PC-3 (cell line): ENCODE measurements at regions of chr5 and their contacts with region 1.

Region 1: DNA sequence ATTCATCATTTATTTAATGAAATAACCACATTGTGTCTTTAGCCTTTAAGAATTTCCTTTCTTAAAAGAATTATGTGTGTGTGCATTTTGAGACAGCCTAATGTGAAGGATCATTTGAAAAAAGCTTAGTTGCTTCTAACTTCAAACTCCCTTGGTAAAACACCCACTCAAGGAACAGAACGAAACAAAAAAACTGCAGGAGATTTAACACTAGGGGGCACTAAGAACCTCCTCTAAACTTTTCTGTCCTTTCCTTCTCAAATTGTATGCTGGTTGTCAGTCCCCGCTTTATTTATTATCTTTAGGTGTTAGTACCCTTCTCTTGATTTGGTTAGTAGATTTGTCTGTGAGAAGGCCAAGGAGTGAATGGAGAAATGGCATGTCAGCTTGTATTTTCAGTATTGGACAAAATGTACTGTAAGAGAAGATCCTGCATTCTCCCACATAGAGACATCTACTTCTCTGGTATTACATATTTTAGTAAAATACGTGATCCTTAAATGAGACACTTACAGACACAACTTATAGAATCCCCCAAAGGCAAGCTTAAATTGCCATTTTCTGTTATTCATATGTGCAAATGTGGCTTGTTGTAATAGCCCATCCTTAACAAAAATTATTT is 229.7 kb downstream of the MRPS30 start:
- DNase-seq: peak; percentile 71
- ATAC-seq: peak; percentile 67
- H3K4me3 ChIP-seq: no peak overlapping the region
- H3K27ac ChIP-seq: no peak overlapping the region
- H3K4me1 ChIP-seq: no peaks in the 10 kb centered on the region
- H3K27me3 ChIP-seq: no peaks in the 10 kb centered on the region
- CTCF ChIP-seq: peak; percentile 85

Region 2: DNA sequence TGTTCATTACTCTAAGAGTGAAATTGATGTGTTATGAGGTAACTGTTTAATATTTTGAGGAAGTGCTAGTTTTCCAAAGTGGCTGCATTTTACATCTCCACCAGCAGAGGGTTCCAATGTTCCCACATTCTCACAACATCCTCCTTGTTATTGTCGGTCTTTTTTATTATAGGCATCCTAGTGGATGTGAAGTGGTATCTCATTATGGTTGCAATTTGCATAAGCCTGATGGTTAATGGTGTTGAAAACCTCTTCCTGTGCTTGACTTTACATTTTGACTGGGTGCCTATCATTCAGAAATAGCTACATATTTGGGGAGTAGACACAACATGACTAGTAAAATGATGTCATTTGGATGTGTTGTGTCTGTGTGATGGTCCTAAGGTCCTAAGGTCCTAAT is 86.1 kb before region 1 on chr5:
- CTCF ChIA-PET with region 1: interaction called, 8 read pairs
- POLR2A ChIA-PET with region 1: no interaction called
- intact Hi-C with region 1: loop called (anchors 5 kb)
- DNase-seq: peak; percentile 74
- ATAC-seq: peak; percentile 63
- H3K4me3 ChIP-seq: no peak overlapping the region
- H3K27ac ChIP-seq: no peak overlapping the region
- H3K4me1 ChIP-seq: no peaks in the 10 kb centered on the region
- H3K27me3 ChIP-seq: no peaks in the 10 kb centered on the region
- CTCF ChIP-seq: peak; percentile 93

Region 3: DNA sequence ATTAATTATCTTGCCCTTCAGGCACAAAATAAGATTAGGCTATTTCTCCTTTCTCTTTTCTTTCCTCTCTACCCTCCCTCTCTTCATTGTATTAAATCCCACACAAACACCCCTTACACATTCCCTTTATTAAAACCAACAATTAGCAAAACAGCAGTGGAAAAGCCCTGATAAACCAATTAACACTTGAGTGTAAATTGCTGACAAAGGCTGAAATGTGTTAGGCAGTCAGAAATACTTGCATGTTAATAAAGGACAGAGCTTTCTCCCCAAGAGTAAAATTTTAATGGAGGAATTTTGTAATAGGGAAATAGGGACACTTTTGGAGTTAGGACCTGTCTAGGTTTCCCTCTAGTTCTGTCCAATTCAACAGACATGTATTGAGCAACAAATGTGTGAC is 141.2 kb after region 1 on chr5:
- CTCF ChIA-PET with region 1: no interaction called
- POLR2A ChIA-PET with region 1: no interaction called
- intact Hi-C with region 1: no loop called
- DNase-seq: no peak
- ATAC-seq: no peak
- H3K4me3 ChIP-seq: no peak overlapping the region
- H3K27ac ChIP-seq: no peak overlapping the region
- H3K4me1 ChIP-seq: no peaks in the 10 kb centered on the region
- H3K27me3 ChIP-seq: no peaks in the 10 kb centered on the region; the same call in 1 of the 2 replicates
- CTCF ChIP-seq: no peak

Region 4: DNA sequence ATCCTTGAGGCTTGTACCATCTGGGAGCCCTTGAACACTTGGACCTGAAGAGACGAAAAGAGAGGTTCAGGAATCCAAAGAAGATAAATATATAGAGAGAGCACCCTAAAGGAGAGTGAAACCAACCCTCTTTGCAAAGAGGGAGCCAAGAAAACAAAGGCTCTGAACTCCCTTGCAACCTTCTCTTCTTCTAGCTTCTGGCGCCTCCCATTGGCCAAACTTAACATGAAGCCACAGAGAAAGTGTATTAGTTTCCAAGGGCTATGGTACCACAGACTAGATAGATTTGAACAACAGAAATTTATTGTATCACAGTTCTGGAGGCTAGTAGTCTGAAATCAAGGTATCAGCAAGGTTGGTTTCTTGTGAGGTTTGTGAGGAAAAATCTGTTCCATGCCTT is 482.6 kb after region 1 on chr5:
- CTCF ChIA-PET with region 1: no interaction called
- POLR2A ChIA-PET with region 1: no interaction called
- intact Hi-C with region 1: loop called (anchors 1 kb)
- DNase-seq: peak; percentile 35
- ATAC-seq: peak; percentile 56; the same call in 1 of the 2 replicates
- H3K4me3 ChIP-seq: no peak overlapping the region
- H3K27ac ChIP-seq: no peak overlapping the region
- H3K4me1 ChIP-seq: no peaks in the 10 kb centered on the region
- H3K27me3 ChIP-seq: no peaks in the 10 kb centered on the region
- CTCF ChIP-seq: peak; percentile 56

Region 5: GRCh38 chr5:45639038-45639437 is 600.6 kb after region 1 on chr5:
- CTCF ChIA-PET with region 1: no interaction called
- POLR2A ChIA-PET with region 1: no interaction called
- intact Hi-C with region 1: loop called (anchors 5 kb)
- DNase-seq: peak; percentile 36
- ATAC-seq: no peak
- H3K4me3 ChIP-seq: no peak overlapping the region
- H3K27ac ChIP-seq: no peak overlapping the region
- H3K4me1 ChIP-seq: no peaks in the 10 kb centered on the region
- H3K27me3 ChIP-seq: no peaks in the 10 kb centered on the region
- CTCF ChIP-seq: peak; percentile 57

Region 6: GRCh38 chr5:45774528-45774927 is 736.1 kb after region 1 on chr5:
- CTCF ChIA-PET with region 1: interaction called, 3 read pairs
- POLR2A ChIA-PET with region 1: no interaction called
- intact Hi-C with region 1: loop called (anchors 2 kb)
- DNase-seq: peak; percentile 40
- ATAC-seq: no peak
- H3K4me3 ChIP-seq: no peak overlapping the region
- H3K27ac ChIP-seq: no peak overlapping the region
- H3K4me1 ChIP-seq: no peaks in the 10 kb centered on the region
- H3K27me3 ChIP-seq: no peaks in the 10 kb centered on the region
- CTCF ChIP-seq: peak; percentile 74